ENCODE measurements at regions of chr17 and their contacts with region 1.

Region 1: GRCh38 chr17:8900626-8901585 is 33.4 kb upstream of the PIK3R6 start:
- DNase-seq: no peak
- H3K4me3 Mint-ChIP-seq: no peak overlapping the region
- H3K27ac Mint-ChIP-seq: peak overlapping the region; percentile 77
- H3K4me1 Mint-ChIP-seq: peaks cover 62% of the 10 kb centered on the region
- H3K27me3 Mint-ChIP-seq: no peaks in the 10 kb centered on the region

Region 2: GRCh38 chr17:8941520-8941919 is 40.6 kb after region 1 on chr17:
- CTCF ChIA-PET with region 1: interaction called, 3 read pairs
- POLR2A ChIA-PET with region 1: interaction called, 14 read pairs
- DNase-seq: peak; percentile 82
- H3K4me3 Mint-ChIP-seq: peak overlapping the region; percentile 75
- H3K27ac Mint-ChIP-seq: peak overlapping the region; percentile 99
- H3K4me1 Mint-ChIP-seq: peaks cover 74% of the 10 kb centered on the region
- H3K27me3 Mint-ChIP-seq: no peaks in the 10 kb centered on the region

Region 3: GRCh38 chr17:8954339-8954738 is 53.4 kb after region 1 on chr17:
- CTCF ChIA-PET with region 1: interaction called, 3 read pairs
- POLR2A ChIA-PET with region 1: interaction called, 12 read pairs
- DNase-seq: peak; percentile 78
- H3K4me3 Mint-ChIP-seq: peak overlapping the region; percentile 36
- H3K27ac Mint-ChIP-seq: peak overlapping the region; percentile 73
- H3K4me1 Mint-ChIP-seq: peaks cover 97% of the 10 kb centered on the region
- H3K27me3 Mint-ChIP-seq: no peaks in the 10 kb centered on the region